MCF 10A (cell line): ENCODE measurements at regions of chr10 and their contacts with region 1.

Region 1: DNA sequence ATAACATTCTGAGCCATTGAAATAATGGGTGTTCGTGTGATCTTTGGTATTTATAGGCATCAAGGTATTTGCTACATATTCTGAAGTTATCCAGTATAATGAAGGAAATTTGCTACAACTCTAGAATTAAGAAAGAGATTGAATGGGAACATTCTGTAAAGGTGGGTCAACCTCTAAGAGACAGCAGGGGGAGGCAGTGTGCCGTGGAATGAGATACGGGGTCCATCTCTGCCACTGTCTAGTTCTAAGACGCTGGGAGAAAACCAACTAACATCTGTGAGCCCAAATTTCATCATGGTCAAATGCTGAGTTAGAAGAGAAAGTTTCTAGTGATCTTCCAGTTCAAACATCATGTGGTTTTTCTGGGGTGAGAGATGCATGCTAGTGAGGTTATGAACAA is 368.9 kb downstream of the SORCS1 start:
- DNase-seq: peak; percentile 64
- H3K4me3 Mint-ChIP-seq: no peak overlapping the region
- H3K27ac Mint-ChIP-seq: no peak overlapping the region
- H3K4me1 Mint-ChIP-seq: peaks cover 6% of the 10 kb centered on the region
- H3K27me3 Mint-ChIP-seq: no peaks in the 10 kb centered on the region
- CTCF ChIP-seq: peak; percentile 52

Region 2: GRCh38 chr10:107011105-107011504 is 215.5 kb after region 1 on chr10:
- CTCF ChIA-PET with region 1: no interaction called
- POLR2A ChIA-PET with region 1: no interaction called
- intact Hi-C with region 1: loop called (anchors 2 kb)
- DNase-seq: peak; percentile 35
- H3K4me3 Mint-ChIP-seq: no peak overlapping the region
- H3K27ac Mint-ChIP-seq: no peak overlapping the region
- H3K4me1 Mint-ChIP-seq: no peaks in the 10 kb centered on the region
- H3K27me3 Mint-ChIP-seq: no peaks in the 10 kb centered on the region
- CTCF ChIP-seq: no peak

Region 3: GRCh38 chr10:107144490-107144889 is 348.9 kb after region 1 on chr10:
- CTCF ChIA-PET with region 1: no interaction called
- POLR2A ChIA-PET with region 1: no interaction called
- intact Hi-C with region 1: loop called (anchors 10 kb)
- DNase-seq: peak; percentile 23
- H3K4me3 Mint-ChIP-seq: no peak overlapping the region
- H3K27ac Mint-ChIP-seq: no peak overlapping the region
- H3K4me1 Mint-ChIP-seq: no peaks in the 10 kb centered on the region
- H3K27me3 Mint-ChIP-seq: no peaks in the 10 kb centered on the region
- CTCF ChIP-seq: no peak